Activated CD4-positive, alpha-beta memory T cell treated with anti-CD3 and anti-CD28 coated beads for 36 hours (primary cell): ENCODE measurements at regions of chr12 and their contacts with region 1.

Region 1: GRCh38 chr12:55899082-55899481 is 28.6 kb downstream of the PYM1 start:
- DNase-seq: peak; percentile 63
- H3K4me3 Mint-ChIP-seq: no peak overlapping the region
- H3K27ac Mint-ChIP-seq: peak overlapping the region; percentile 69
- H3K4me1 Mint-ChIP-seq: peaks cover 10% of the 10 kb centered on the region
- H3K27me3 Mint-ChIP-seq: no peaks in the 10 kb centered on the region

Region 2: DNA sequence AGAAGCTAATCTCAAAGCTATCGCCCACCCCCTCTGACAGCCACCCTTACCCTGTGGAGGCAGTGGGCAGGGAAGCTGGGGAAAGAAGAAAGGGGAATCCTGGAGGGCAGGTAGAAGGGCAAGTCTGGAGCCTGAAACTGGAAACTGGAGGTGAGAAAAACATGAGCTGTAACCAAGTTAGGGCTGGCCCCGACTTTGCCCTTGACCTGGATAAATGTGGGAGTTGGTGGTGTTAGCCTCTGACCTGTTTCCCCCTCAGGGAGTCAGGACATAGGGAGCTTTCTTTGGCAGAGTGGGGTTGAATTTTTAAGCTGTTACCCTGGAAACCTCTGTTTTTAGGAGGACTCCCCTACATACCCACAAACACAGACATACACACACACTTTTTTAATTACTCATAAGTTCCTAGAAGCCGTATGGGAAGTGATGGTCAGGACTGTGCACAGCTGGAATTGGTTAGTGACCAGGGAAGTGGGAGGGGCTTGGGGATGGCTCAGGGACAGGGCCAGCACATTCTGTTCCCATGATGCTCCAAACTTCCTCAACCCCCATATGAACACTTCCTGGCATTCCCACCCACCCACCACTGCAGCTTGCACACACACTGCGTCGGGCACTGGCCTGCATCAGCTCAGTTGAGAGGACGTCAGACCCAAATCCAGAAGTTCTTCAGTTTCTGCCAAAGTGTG is 51.3 kb before region 1 on chr12:
- CTCF ChIA-PET with region 1: no interaction called
- POLR2A ChIA-PET with region 1: no interaction called
- intact Hi-C with region 1: loop called (anchors 5 kb)
- DNase-seq: peak; percentile 63
- H3K4me3 Mint-ChIP-seq: no peak overlapping the region
- H3K27ac Mint-ChIP-seq: peak overlapping the region; percentile 73
- H3K4me1 Mint-ChIP-seq: peaks cover 15% of the 10 kb centered on the region
- H3K27me3 Mint-ChIP-seq: peaks cover 2% of the 10 kb centered on the region

Region 3: GRCh38 chr12:55915482-55915859 is 16.4 kb after region 1 on chr12:
- CTCF ChIA-PET with region 1: interaction called, 3 read pairs
- POLR2A ChIA-PET with region 1: no interaction called
- intact Hi-C with region 1: loop called (anchors 2 kb)
- DNase-seq: no peak
- H3K4me3 Mint-ChIP-seq: no peak overlapping the region
- H3K27ac Mint-ChIP-seq: peak overlapping the region; percentile 8
- H3K4me1 Mint-ChIP-seq: peaks cover 37% of the 10 kb centered on the region
- H3K27me3 Mint-ChIP-seq: no peaks in the 10 kb centered on the region